Heart right ventricle (tissue), 16 donors: ENCODE measurements at regions of chr13 and their contacts with region 1.

Region 1: GRCh38 chr13:43905435-43906031 is 25.8 kb downstream of the LACC1 start:
- DNase-seq: peak in 1 of 2 donors; percentile 42
- ATAC-seq: peak in 6 of 8 donors; percentile 63 to 78 (median 68)
- H3K4me3 ChIP-seq: no peak overlapping the region
- H3K27ac ChIP-seq: no peak overlapping the region
- H3K4me1 ChIP-seq: peaks cover 0 to 17% (median 5%) of the 10 kb centered on the region in 9 donors
- H3K27me3 ChIP-seq: peaks cover 0 to 18% (median 0%) of the 10 kb centered on the region in 7 donors
- CTCF ChIP-seq: peak; percentile 65 to 90 (median 81)

Region 2: GRCh38 chr13:43981091-43981490 is 75.6 kb after region 1 on chr13:
- intact Hi-C with region 1: loop called in 4 of 10 experiments (anchors 2 to 5 kb)
- DNase-seq: no peak
- ATAC-seq: peak in 1 of 8 donors; percentile 27
- H3K4me3 ChIP-seq: no peak overlapping the region
- H3K27ac ChIP-seq: peak overlapping the region in 1 of 10 donors; percentile 46
- H3K4me1 ChIP-seq: peaks cover 0 to 17% (median 7%) of the 10 kb centered on the region in 9 donors
- H3K27me3 ChIP-seq: no peaks in the 10 kb centered on the region
- CTCF ChIP-seq: no peak

Region 3: GRCh38 chr13:43994999-43995859 is 89.7 kb after region 1 on chr13:
- intact Hi-C with region 1: no loop called
- DNase-seq: no peak
- ATAC-seq: no peak
- H3K4me3 ChIP-seq: no peak overlapping the region
- H3K27ac ChIP-seq: no peak overlapping the region
- H3K4me1 ChIP-seq: peaks cover 0 to 22% (median 0%) of the 10 kb centered on the region in 9 donors
- H3K27me3 ChIP-seq: no peaks in the 10 kb centered on the region
- CTCF ChIP-seq: no peak

Region 4: DNA sequence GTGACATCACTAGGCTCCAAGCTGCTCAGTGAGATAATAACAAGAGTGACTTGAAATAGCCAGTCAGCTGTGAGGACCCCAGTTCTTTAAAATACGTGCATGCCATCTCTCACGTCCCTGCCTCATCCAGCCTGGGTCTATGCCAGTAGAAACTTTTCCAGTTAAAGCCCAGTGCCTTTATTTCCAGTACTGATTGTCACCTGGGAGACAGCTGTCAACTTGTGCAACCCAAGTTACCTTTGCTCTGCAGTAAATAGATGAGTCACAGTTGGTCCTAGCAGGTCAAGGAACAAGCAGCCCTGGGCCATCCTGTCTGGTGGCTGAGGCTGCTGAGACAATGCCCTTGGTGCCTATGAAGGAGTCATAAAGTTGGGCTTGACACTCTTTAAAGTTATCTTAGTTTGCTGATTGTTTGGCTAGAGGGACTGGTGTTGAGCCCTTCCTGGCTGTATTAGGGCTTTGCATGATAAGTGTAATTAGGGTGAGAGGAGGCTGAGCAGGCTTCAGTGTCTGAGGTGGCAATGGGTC is 202.9 kb after region 1 on chr13:
- intact Hi-C with region 1: loop called in 1 of 10 experiments (anchors 5 kb)
- DNase-seq: peak; percentile 53 to 54
- ATAC-seq: peak; percentile 56 to 95 (median 78)
- H3K4me3 ChIP-seq: no peak overlapping the region
- H3K27ac ChIP-seq: peak overlapping the region; percentile 56 to 80 (median 72)
- H3K4me1 ChIP-seq: peaks cover 14 to 80% (median 42%) of the 10 kb centered on the region in 9 donors
- H3K27me3 ChIP-seq: no peaks in the 10 kb centered on the region
- CTCF ChIP-seq: no peak

Region 5: GRCh38 chr13:44191504-44192171 is 286.1 kb after region 1 on chr13:
- intact Hi-C with region 1: loop called in 1 of 10 experiments (anchors 10 kb)
- DNase-seq: peak in 1 of 2 donors; percentile 71
- ATAC-seq: peak; percentile 76 to 97 (median 95)
- H3K4me3 ChIP-seq: peak overlapping the region in 3 of 10 donors; percentile 21
- H3K27ac ChIP-seq: peak overlapping the region in 6 of 10 donors; percentile 10 to 62 (median 51)
- H3K4me1 ChIP-seq: peaks cover 0 to 11% (median 0%) of the 10 kb centered on the region in 9 donors
- H3K27me3 ChIP-seq: no peaks in the 10 kb centered on the region
- CTCF ChIP-seq: peak; percentile 51 to 80 (median 70)

Region 6: GRCh38 chr13:44219577-44220548 is 314.3 kb after region 1 on chr13:
- intact Hi-C with region 1: no loop called
- DNase-seq: no peak
- ATAC-seq: peak in 7 of 8 donors; percentile 15 to 37 (median 27)
- H3K4me3 ChIP-seq: no peak overlapping the region
- H3K27ac ChIP-seq: peak overlapping the region; percentile 36 to 68 (median 54)
- H3K4me1 ChIP-seq: peaks cover 6 to 45% (median 30%) of the 10 kb centered on the region in 9 donors
- H3K27me3 ChIP-seq: no peaks in the 10 kb centered on the region
- CTCF ChIP-seq: no peak

Region 7: DNA sequence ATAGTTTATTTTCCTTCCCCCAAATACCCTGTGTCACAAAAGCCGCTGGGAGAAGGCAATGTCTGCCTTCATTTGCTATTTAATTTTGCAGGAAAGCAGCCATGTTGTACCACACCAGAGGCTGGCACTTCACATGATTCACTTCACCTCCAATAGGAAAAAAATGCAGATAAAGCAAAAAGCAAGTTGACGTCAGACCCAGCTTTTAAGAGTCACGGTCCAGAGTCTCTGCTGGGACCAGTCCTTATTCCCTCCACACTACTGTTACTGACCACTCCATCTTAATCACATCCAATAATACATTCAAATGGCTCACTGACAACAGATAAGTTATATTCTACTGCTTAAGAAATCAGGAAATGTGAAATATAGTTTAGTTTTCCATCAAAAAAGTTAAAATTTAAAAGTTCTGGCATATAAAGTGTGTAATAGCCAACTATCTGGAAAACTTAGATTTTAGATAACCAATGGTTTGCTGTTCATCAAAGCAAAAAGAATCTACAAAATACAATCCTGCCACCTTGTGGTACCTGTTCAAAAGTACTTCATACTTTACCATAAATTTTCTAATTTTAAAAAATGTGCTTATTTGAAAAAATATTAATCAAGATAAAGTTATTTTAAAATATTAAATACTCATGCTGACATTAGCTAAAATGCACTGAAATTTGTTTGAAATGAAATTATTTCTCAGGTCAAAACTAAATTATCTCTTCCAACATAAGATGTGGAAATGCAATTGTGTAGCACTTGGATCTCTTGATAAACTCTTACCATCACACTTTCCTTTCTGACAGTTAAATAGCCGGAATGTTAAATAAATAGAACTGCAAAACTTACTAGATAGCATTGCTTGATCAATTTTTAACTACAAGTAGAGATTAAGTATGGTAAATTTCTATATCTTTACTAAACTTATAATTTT is 565.4 kb after region 1 on chr13:
- intact Hi-C with region 1: loop called in 7 of 10 experiments (anchors 1 to 10 kb)
- DNase-seq: no peak
- ATAC-seq: no peak
- H3K4me3 ChIP-seq: no peak overlapping the region
- H3K27ac ChIP-seq: no peak overlapping the region
- H3K4me1 ChIP-seq: peaks cover 0 to 11% (median 9%) of the 10 kb centered on the region in 9 donors
- H3K27me3 ChIP-seq: no peaks in the 10 kb centered on the region
- CTCF ChIP-seq: peak; percentile 24 to 71 (median 57)

Region 8: GRCh38 chr13:44854313-44855060 is 949.0 kb after region 1 on chr13:
- intact Hi-C with region 1: no loop called
- DNase-seq: peak; percentile 61 to 70
- ATAC-seq: peak; percentile 90 to 98 (median 95)
- H3K4me3 ChIP-seq: no peak overlapping the region
- H3K27ac ChIP-seq: peak overlapping the region; percentile 31 to 82 (median 73)
- H3K4me1 ChIP-seq: peaks cover 0 to 37% (median 15%) of the 10 kb centered on the region in 9 donors
- H3K27me3 ChIP-seq: no peaks in the 10 kb centered on the region
- CTCF ChIP-seq: no peak